ENCODE measurements at regions of chr12 and their contacts with region 1.

Region 1: DNA sequence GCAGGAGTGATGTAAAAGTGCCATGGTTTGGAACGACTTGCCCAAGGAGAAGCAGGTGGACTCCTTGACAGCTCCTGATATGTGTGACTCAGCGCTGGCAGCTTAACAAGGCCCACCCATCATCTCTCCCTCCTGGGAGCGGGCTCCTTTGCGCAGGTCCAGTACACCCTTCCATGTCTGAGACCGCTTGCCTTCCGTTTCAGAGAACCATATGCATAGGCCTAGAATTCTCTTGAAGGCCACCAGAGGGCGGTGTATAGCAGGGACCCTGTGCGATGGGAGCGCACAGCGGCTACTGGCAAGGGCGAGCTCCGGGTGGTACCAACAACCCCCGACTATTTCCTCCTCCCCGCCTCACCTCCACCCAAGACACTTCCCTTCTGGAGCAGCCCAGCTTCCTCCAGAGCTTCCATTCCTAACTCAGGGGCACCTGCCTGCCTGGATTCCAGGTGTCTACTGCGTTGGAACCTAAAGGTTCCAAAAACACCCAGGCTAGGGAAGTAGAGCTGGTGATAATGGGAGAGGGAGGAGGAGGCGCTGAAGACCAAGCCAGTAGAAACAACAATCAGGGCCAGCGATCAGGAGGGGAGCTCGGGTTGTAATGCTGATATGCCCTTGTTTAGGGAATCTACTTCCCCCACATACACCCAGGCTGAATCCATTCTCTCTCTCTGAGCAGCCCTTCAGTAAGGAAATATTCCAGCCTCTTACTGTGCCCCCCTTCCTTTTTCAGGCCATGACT is 6.2 kb downstream of the DHH start:
- DNase-seq: peak; percentile 70
- H3K4me3 Mint-ChIP-seq: no peak overlapping the region
- H3K27ac Mint-ChIP-seq: no peak overlapping the region
- H3K4me1 Mint-ChIP-seq: no peaks in the 10 kb centered on the region
- H3K27me3 Mint-ChIP-seq: peaks cover 39% of the 10 kb centered on the region
- CTCF ChIP-seq: peak; percentile 55

Region 2: GRCh38 chr12:49232940-49233841 is 144.8 kb after region 1 on chr12:
- CTCF ChIA-PET with region 1: interaction called, 14 read pairs
- intact Hi-C with region 1: no loop called
- DNase-seq: no peak
- H3K4me3 Mint-ChIP-seq: no peak overlapping the region
- H3K27ac Mint-ChIP-seq: no peak overlapping the region
- H3K4me1 Mint-ChIP-seq: no peaks in the 10 kb centered on the region
- H3K27me3 Mint-ChIP-seq: no peaks in the 10 kb centered on the region
- CTCF ChIP-seq: no peak

Measured in Calu3 (cell line).